Activated CD4-positive, alpha-beta memory T cell treated with anti-CD3 and anti-CD28 coated beads for 36 hours (primary cell): ENCODE measurements at regions of chr5 and their contacts with region 1.

Region 1: DNA sequence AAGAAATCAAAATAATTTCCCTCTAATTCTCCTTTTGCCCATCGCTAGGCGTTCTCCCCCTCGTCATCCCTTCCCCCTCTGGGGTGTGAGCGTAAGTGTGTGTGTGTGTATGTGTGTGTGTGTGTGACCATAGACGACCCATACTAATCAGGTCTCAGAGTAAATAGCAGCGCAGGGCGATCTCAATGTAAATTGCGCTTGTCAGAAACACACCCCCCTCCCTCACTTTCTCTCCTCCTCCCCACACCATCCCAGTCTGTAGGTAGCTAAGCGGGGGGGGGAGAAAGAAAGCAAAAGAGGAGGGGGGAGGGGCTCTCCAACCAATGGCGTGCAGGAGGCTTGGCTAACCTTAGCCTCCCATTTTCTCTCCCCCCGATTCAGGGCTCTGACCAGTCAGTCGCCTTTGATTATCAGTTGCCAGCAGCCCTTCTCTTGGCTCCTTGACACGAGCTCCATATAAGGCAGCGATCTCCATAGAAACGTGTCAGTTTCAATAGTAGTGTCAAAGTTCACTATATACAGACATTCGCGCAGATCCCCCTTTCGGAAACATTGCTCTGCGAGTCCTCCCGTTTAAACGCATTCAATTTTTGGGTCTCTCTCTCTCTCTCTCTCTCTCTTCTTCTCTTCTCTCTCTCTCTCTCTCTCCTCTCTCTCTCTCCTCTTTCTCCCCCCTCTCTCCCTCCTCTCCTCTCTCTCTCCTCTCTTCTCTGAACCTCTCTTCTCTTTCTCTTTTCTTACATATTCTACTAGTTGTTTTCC is at the start of gene NR2F1:
- DNase-seq: no peak
- H3K4me3 Mint-ChIP-seq: no peak within 1 kb of the TSS
- H3K27ac Mint-ChIP-seq: no peak within 1 kb of the TSS
- H3K4me1 Mint-ChIP-seq: peaks cover 27% of the 10 kb centered on the region
- H3K27me3 Mint-ChIP-seq: peaks cover 44% of the 10 kb centered on the region
- total RNA-seq, gene NR2F1: not detected

Region 2: GRCh38 chr5:93226202-93226735 is 356.6 kb before region 1 on chr5:
- CTCF ChIA-PET with region 1: no interaction called
- POLR2A ChIA-PET with region 1: no interaction called
- intact Hi-C with region 1: no loop called
- DNase-seq: no peak
- H3K4me3 Mint-ChIP-seq: no peak overlapping the region
- H3K27ac Mint-ChIP-seq: no peak overlapping the region
- H3K4me1 Mint-ChIP-seq: no peaks in the 10 kb centered on the region
- H3K27me3 Mint-ChIP-seq: no peaks in the 10 kb centered on the region

Region 3: GRCh38 chr5:93570294-93571113 is 12.4 kb before region 1 on chr5:
- CTCF ChIA-PET with region 1: interaction called, 3 read pairs
- POLR2A ChIA-PET with region 1: no interaction called
- intact Hi-C with region 1: loop called (anchors 2 kb)
- DNase-seq: peak; percentile 20
- H3K4me3 Mint-ChIP-seq: no peak overlapping the region
- H3K27ac Mint-ChIP-seq: no peak overlapping the region
- H3K4me1 Mint-ChIP-seq: peaks cover 19% of the 10 kb centered on the region
- H3K27me3 Mint-ChIP-seq: peaks cover 65% of the 10 kb centered on the region

Region 4: DNA sequence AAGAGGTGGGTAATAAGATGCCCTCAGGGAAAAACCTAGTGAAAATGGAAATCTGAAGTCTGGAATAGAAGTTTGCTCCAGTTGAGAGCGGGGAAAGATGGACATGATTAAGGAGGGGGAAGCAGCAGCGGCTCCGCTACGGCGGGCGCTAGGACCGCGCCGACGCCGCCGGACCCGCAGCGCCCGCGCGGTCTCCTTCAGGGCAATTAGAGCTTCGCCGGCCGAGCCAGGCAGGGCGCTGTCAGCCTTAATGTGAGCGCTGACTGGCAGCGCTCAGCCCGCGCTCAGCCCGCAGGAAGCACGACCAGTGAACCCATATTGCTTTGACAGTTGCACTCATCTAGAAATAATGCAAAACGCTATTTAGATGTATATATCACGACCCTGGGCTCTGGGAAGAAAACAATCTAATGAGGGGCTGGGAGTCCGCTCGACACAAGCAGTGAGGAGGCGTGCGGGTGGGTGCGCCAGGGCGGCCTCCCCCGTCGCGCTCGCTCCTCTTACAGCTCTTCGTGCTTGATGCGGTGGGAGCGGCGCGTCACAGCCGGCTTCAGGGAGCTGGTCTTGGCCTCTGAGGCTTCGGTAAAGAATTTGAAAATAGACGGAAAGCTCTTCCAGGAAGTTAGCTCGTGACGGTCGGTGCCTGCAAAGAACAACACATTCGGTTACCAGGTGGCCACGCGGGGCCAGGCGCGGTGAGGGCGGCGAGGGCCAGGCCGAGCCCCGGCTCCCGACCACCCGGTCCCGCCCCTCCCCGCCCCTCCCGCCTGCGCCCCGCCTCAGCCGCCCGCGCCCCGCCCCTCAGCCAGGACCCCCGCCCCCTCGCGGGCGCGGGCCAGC is 37.8 kb after region 1 on chr5:
- CTCF ChIA-PET with region 1: interaction called, 3 read pairs
- POLR2A ChIA-PET with region 1: no interaction called
- intact Hi-C with region 1: loop called (anchors 2 kb)
- DNase-seq: peak; percentile 67
- H3K4me3 Mint-ChIP-seq: peak overlapping the region; percentile 81
- H3K27ac Mint-ChIP-seq: peak overlapping the region; percentile 15
- H3K4me1 Mint-ChIP-seq: peaks cover 32% of the 10 kb centered on the region
- H3K27me3 Mint-ChIP-seq: peaks cover 19% of the 10 kb centered on the region

Region 5: DNA sequence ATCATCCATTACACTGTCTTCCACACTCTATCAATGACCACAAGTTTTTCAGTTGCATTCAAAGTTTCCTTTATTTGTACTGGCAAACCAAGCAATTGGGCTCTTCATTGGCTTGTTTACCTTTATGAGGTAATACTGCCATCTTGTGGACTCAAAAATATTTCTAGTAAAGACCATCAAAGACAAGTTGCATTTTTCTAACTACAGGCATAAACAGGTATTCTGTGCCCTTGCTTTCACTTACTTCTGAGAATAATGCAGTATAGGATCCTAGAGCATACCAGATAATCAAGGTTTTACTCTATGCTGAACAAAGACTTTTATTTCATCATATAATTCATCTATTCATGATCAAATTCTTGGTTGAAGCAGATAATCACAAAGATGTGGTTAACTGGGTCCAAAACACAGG is 332.3 kb after region 1 on chr5:
- CTCF ChIA-PET with region 1: interaction called, 3 read pairs
- POLR2A ChIA-PET with region 1: no interaction called
- intact Hi-C with region 1: loop called (anchors 2 kb)
- DNase-seq: no peak
- H3K4me3 Mint-ChIP-seq: no peak overlapping the region
- H3K27ac Mint-ChIP-seq: no peak overlapping the region
- H3K4me1 Mint-ChIP-seq: no peaks in the 10 kb centered on the region
- H3K27me3 Mint-ChIP-seq: no peaks in the 10 kb centered on the region

Region 6: DNA sequence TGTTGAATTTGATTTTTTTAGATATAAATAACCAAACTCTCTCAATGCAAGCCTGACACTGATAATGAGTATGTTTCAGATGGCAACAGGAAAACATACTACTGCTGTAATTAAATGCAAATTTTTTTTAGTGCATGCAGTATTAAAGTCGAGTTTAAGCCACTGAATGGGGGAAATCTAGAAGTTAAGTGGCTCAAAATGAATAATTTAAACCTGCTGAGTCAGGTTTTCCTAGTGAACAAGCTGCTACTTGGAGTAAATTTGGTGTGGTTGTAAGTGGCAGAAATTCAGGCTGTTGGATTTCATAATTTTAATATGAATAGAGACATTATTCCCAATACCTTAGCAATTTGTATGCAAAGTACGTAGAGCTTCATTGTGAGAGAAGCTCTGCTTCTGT is 1157.4 kb after region 1 on chr5:
- CTCF ChIA-PET with region 1: interaction called, 3 read pairs
- POLR2A ChIA-PET with region 1: no interaction called
- intact Hi-C with region 1: loop called (anchors 5 kb)
- DNase-seq: no peak
- H3K4me3 Mint-ChIP-seq: no peak overlapping the region
- H3K27ac Mint-ChIP-seq: no peak overlapping the region
- H3K4me1 Mint-ChIP-seq: peaks cover 1% of the 10 kb centered on the region
- H3K27me3 Mint-ChIP-seq: no peaks in the 10 kb centered on the region

Region 7: GRCh38 chr5:94849821-94850736 is 1267.2 kb after region 1 on chr5:
- CTCF ChIA-PET with region 1: no interaction called
- POLR2A ChIA-PET with region 1: no interaction called
- intact Hi-C with region 1: loop called (anchors 10 kb)
- DNase-seq: peak; percentile 17
- H3K4me3 Mint-ChIP-seq: no peak overlapping the region
- H3K27ac Mint-ChIP-seq: no peak overlapping the region
- H3K4me1 Mint-ChIP-seq: peaks cover 7% of the 10 kb centered on the region
- H3K27me3 Mint-ChIP-seq: peaks cover 1% of the 10 kb centered on the region